ENCODE measurements at regions of chr12 and their contacts with region 1.

Region 1: DNA sequence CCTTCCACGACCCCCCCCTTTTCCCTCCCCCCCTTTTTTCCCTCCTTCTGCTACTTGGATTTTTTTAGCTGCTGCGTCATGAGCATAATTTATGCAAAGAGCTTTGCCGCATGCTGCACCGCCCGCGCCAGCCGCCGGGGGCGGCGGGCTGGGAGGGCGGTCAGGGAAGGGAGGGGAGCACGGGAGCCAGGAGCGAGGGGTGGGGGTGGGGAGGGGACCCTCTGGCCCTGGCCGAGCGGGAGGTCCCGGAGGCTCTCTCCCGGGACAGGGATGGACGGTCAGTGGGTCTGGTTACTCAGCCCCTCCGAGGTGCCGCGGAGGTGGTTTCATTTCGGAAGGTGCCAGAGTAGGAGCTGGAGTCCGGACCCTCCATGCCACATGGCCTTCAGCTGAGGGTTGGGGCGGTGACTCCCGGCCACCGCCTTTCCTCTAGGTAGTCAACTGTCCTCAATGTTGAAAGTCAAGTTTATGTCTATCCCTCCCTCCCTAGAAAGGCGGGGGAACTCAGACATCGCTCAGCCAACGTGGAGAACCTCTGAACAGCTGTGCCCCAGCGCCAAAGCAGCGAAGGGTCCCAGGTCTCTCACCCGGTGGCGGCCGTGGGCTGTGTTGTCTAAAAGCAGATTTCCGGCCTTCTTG is at the start of gene POU6F1:
- DNase-seq: peak; percentile 68
- ATAC-seq: peak; percentile 79
- H3K4me3 Mint-ChIP-seq: peak within 1 kb of the TSS; percentile 91
- H3K27ac Mint-ChIP-seq: peak within 1 kb of the TSS; percentile 95
- H3K4me1 Mint-ChIP-seq: peaks cover 17% of the 10 kb centered on the region
- H3K27me3 Mint-ChIP-seq: no peaks in the 10 kb centered on the region
- CTCF ChIP-seq: no peak
- total RNA-seq, gene POU6F1: 20.3 and 26.2 TPM in 2 replicates

Region 2: GRCh38 chr12:49821373-49822287 is 1396.5 kb before region 1 on chr12:
- CTCF ChIA-PET with region 1: no interaction called
- POLR2A ChIA-PET with region 1: no interaction called
- intact Hi-C with region 1: no loop called
- DNase-seq: no peak
- ATAC-seq: no peak
- H3K4me3 Mint-ChIP-seq: no peak overlapping the region
- H3K27ac Mint-ChIP-seq: no peak overlapping the region
- H3K4me1 Mint-ChIP-seq: peaks cover 25% of the 10 kb centered on the region
- H3K27me3 Mint-ChIP-seq: no peaks in the 10 kb centered on the region
- CTCF ChIP-seq: no peak

Region 3: GRCh38 chr12:51025836-51026638 is 192.1 kb before region 1 on chr12 and contains the start of gene SLC11A2:
- CTCF ChIA-PET with region 1: no interaction called
- POLR2A ChIA-PET with region 1: interaction called, 16 read pairs
- intact Hi-C with region 1: loop called (anchors 5 kb)
- DNase-seq: peak; percentile 86
- ATAC-seq: peak; percentile 98
- H3K4me3 Mint-ChIP-seq: peak within 1 kb of the TSS; percentile 99
- H3K27ac Mint-ChIP-seq: peak within 1 kb of the TSS; percentile 93
- H3K4me1 Mint-ChIP-seq: peaks cover 42% of the 10 kb centered on the region
- H3K27me3 Mint-ChIP-seq: no peaks in the 10 kb centered on the region
- CTCF ChIP-seq: no peak
- total RNA-seq, gene SLC11A2: 32.3 and 44.6 TPM in 2 replicates

Region 4: DNA sequence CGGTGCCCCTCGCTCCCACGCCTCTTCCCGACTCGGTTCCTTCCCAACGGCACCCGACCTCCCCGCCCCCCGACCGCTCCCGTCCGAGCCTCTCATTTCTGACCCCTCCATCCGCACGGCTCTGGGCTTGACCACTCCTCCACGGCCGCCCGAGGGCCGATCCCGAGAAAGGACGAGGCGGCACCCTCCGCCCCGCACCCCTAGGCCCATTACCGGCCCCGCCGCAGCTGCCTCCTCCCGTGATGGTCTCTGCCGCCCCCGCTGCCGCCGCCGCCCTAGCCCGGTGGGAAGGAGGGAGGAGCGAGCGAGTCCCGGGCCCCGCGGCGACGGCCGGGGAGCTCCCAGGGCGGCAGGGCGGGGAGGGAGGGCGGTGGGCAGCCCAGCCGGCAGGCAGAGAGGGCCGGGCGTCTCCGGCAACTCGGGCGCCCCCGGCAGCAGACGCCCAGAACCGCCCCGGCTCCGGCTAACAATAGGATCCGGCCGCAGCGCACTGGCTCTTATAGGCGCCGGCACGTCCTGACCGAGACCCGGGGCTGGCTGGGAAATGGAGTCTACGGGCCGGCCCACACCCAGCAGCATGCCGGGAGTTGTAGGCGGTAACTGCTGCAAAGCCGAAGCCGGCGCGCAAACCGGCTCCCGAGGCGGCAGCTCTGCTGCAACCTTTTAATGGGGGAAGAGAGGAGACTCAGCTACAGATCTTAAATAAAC is 134.8 kb before region 1 on chr12 and contains the start of gene CSRNP2:
- CTCF ChIA-PET with region 1: no interaction called
- POLR2A ChIA-PET with region 1: interaction called, 21 read pairs
- intact Hi-C with region 1: loop called (anchors 1 kb)
- DNase-seq: peak; percentile 92
- ATAC-seq: peak; percentile 99
- H3K4me3 Mint-ChIP-seq: peak within 1 kb of the TSS; percentile 96
- H3K27ac Mint-ChIP-seq: peak within 1 kb of the TSS; percentile 71
- H3K4me1 Mint-ChIP-seq: peaks cover 20% of the 10 kb centered on the region
- H3K27me3 Mint-ChIP-seq: no peaks in the 10 kb centered on the region
- CTCF ChIP-seq: no peak
- total RNA-seq, gene CSRNP2: 16.9 and 17.7 TPM in 2 replicates

Region 5: GRCh38 chr12:51188359-51189051 is 29.6 kb before region 1 on chr12:
- CTCF ChIA-PET with region 1: no interaction called
- POLR2A ChIA-PET with region 1: interaction called, 14 read pairs
- intact Hi-C with region 1: no loop called
- DNase-seq: no peak
- ATAC-seq: peak; percentile 60
- H3K4me3 Mint-ChIP-seq: peak overlapping the region; percentile 73
- H3K27ac Mint-ChIP-seq: no peak overlapping the region
- H3K4me1 Mint-ChIP-seq: peaks cover 29% of the 10 kb centered on the region
- H3K27me3 Mint-ChIP-seq: no peaks in the 10 kb centered on the region
- CTCF ChIP-seq: no peak

Region 6: GRCh38 chr12:51246254-51246853 is 28.3 kb after region 1 on chr12:
- CTCF ChIA-PET with region 1: interaction called, 3 read pairs
- POLR2A ChIA-PET with region 1: interaction called, 198 read pairs
- intact Hi-C with region 1: no loop called
- DNase-seq: no peak
- ATAC-seq: peak; percentile 20
- H3K4me3 Mint-ChIP-seq: no peak overlapping the region
- H3K27ac Mint-ChIP-seq: peak overlapping the region; percentile 87
- H3K4me1 Mint-ChIP-seq: peaks cover 49% of the 10 kb centered on the region
- H3K27me3 Mint-ChIP-seq: no peaks in the 10 kb centered on the region
- CTCF ChIP-seq: no peak

Region 7: GRCh38 chr12:51326762-51327439 is 108.8 kb after region 1 on chr12:
- CTCF ChIA-PET with region 1: no interaction called
- POLR2A ChIA-PET with region 1: interaction called, 16 read pairs
- intact Hi-C with region 1: no loop called
- DNase-seq: no peak
- ATAC-seq: peak; percentile 41
- H3K4me3 Mint-ChIP-seq: peak overlapping the region; percentile 62
- H3K27ac Mint-ChIP-seq: peak overlapping the region; percentile 72
- H3K4me1 Mint-ChIP-seq: peaks cover 81% of the 10 kb centered on the region
- H3K27me3 Mint-ChIP-seq: no peaks in the 10 kb centered on the region
- CTCF ChIP-seq: no peak

Region 8: DNA sequence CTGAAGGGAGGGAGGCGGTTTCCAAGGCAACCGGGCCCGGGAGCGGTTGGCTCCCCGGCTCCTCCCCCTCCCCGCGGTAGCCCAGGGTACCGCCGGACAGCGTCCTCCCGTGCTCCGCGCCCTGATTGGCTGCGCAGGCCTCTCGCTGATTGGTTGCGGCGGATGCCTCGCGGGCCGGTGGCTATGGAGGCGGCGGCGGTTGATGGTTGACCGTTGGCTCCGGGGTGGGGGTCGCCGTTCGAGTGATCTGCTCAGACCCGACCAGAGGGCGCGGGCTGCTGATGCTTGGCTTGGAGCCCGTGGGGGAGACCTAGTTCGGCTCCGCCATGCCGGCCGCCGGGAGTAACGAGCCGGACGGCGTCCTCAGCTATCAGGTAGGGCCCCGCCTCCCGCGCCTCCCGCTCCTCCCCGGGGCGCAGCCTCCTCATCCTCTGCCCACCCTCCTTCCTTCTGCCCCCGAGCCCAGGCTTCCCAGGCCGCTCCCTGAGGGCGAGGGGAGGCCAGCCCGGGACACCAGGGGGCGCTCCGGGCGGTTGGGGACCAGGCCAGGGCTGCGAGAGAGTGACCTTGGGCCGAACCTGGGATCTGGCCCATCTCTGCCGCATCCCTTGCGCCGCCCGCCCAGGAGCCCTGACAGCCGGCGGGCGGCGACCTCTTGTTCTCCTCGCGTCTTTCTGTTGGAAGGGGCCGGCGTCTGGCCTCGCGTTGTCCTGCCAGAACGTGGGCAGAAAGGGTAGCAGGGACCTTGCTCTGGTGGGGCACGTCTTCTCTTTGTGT is 206.8 kb after region 1 on chr12 and contains the start of gene SLC4A8:
- CTCF ChIA-PET with region 1: no interaction called
- POLR2A ChIA-PET with region 1: no interaction called
- intact Hi-C with region 1: no loop called
- DNase-seq: peak; percentile 75
- ATAC-seq: peak; percentile 92
- H3K4me3 Mint-ChIP-seq: peak within 1 kb of the TSS; percentile 83
- H3K27ac Mint-ChIP-seq: peak within 1 kb of the TSS; percentile 25
- H3K4me1 Mint-ChIP-seq: peaks cover 16% of the 10 kb centered on the region
- H3K27me3 Mint-ChIP-seq: no peaks in the 10 kb centered on the region
- CTCF ChIP-seq: no peak
- total RNA-seq, gene SLC4A8: 5.2 and 5.8 TPM in 2 replicates

Measured in activated B cell treated with CpG ODN at 0.5 μM for 24 hours (primary cell).